ENCODE measurements at regions of chr6 and their contacts with region 1.

Region 1: DNA sequence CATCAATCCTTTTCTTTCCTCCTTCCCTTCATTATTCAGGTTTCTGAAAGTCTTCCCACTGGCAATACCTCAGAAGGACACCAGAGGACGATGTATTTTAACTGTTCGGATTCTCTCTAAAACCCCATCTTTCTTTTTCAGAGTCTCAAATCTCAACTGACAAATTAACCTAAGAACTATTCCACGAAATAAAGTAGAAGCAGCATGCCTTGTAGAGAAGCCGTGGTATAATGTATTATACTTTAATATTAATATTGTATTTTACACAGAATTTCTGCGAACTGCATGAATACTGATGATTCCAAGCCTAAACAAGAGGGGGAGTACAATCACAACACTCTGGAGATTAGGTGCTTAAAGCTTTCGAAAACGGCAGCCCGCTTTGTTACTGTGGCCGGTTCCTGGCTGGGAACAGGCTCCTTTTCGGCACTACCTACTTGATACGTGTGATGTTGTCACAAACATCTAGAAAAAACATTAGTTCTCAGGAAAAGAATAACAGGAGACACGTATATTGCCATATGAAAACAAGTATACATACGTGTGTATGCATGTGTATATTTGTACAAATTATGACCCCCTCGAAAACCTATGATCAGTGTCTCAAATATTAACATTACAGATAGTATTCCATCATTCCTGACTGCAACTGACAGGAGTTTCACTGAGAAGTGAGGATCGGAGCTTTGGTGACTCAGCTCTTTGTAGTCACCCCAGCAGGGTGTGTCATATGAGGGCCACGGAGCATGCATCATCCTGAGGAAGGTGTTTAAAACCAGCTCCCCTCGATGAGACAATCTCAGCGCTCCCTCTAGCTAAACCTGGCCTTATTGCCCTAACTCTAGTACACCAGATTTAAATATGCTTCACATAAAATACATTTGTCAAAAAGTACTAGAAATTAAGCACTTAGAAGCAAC is 319.7 kb upstream of the TCF21 start:
- DNase-seq: peak; percentile 16 to 32
- H3K4me3 ChIP-seq: no peak overlapping the region
- H3K27ac ChIP-seq: no peak overlapping the region
- H3K4me1 ChIP-seq: no peaks in the 10 kb centered on the region
- H3K27me3 ChIP-seq: no peaks in the 10 kb centered on the region
- CTCF ChIP-seq: peak; percentile 62 to 93 (median 86)
- POLR2A ChIP-seq: no peak

Region 2: DNA sequence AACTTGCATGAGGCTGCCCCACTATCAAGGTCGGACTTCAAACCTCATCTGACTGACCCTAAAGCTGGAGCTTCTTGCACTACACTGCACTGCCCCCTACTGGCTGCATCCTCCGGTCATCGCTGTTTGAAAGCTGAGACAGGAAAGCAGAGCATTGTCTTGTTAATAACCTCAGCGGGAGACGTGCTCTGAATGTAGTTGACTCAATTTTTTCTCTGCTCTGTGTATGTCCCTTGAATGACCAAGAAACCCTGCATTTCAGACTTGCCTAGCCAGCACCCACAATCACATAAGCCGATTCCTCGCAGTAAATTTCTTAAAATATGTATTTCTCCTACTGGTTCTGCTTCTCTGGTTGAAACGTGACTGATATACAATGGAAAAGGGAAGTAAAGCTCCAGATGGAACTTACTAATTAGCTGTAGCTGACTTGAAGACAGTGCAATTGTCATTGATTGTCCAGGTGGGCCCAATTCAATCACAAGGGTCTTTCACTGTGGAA is 347.5 kb after region 1 on chr6:
- intact Hi-C with region 1: loop called (anchors 10 kb)
- DNase-seq: peak; percentile 83 to 89
- H3K4me3 ChIP-seq: no peak overlapping the region
- H3K27ac ChIP-seq: no peak overlapping the region
- H3K4me1 ChIP-seq: no peaks in the 10 kb centered on the region
- H3K27me3 ChIP-seq: no peaks in the 10 kb centered on the region
- CTCF ChIP-seq: peak; percentile 43 to 86 (median 69)
- POLR2A ChIP-seq: no peak